ENCODE measurements at regions of chr22 and their contacts with region 1.

Region 1: GRCh38 chr22:37244114-37244921 is at the start of gene RAC2:
- DNase-seq: peak; percentile 93 to 99 (median 98)
- H3K4me3 ChIP-seq: peak within 1 kb of the TSS; percentile 67 to 99 (median 93)
- H3K27ac ChIP-seq: peak within 1 kb of the TSS; percentile 79 to 89
- H3K4me1 ChIP-seq: peaks cover 6 to 66% (median 58%) of the 10 kb centered on the region in 4 experiments
- H3K27me3 ChIP-seq: no peaks in the 10 kb centered on the region

Region 2: DNA sequence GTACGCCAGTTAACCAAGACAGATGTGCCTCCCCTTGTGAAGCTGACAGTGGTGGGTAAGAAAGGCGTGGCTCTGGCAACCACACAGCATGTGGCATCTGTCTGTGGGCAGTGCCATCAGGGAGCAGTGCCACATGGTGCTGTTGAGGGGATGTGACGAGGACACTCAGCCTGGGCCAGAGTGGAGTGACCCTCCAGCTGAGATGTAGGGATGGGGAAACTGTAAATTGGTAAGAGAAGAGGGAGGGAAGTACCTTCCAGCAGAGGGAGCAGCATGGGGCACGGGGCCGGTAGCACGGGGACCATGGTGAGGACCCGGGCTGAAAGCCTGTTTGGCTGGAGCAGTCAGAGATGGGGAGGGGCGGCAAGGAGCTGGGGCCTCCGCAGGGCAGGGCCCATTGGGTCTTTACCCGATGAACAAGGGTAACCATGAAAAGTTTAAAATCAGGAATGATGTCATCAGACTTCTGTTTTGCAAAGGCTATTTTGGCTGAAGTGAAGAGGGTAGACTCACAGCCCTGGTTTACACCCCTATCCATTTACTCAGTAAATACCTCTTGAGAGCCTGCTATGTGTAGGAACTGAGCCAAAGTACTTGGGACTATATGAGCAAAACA is 145.2 kb before region 1 on chr22:
- CTCF ChIA-PET with region 1: no interaction called
- POLR2A ChIA-PET with region 1: no interaction called
- DNase-seq: peak; percentile 19 to 47 (median 32)
- H3K4me3 ChIP-seq: no peak overlapping the region
- H3K27ac ChIP-seq: no peak overlapping the region
- H3K4me1 ChIP-seq: no peaks in the 10 kb centered on the region
- H3K27me3 ChIP-seq: peaks cover 0 to 39% (median 7%) of the 10 kb centered on the region in 5 experiments

Region 3: GRCh38 chr22:37199103-37199759 is 45.1 kb before region 1 on chr22:
- CTCF ChIA-PET with region 1: interaction called, 15 read pairs
- POLR2A ChIA-PET with region 1: interaction called, 4 read pairs
- DNase-seq: peak; percentile 98 to 99 (median 99)
- H3K4me3 ChIP-seq: peak overlapping the region; percentile 48 to 82 (median 61)
- H3K27ac ChIP-seq: peak overlapping the region; percentile 78 to 81
- H3K4me1 ChIP-seq: peaks cover 3 to 31% (median 19%) of the 10 kb centered on the region in 4 experiments
- H3K27me3 ChIP-seq: no peaks in the 10 kb centered on the region

Region 4: GRCh38 chr22:37218771-37219411 is 25.4 kb before region 1 on chr22:
- CTCF ChIA-PET with region 1: interaction called, 11 read pairs
- POLR2A ChIA-PET with region 1: interaction called, 3 read pairs
- DNase-seq: peak; percentile 68 to 98 (median 96)
- H3K4me3 ChIP-seq: peak overlapping the region in 1 of 7 experiments; percentile 17
- H3K27ac ChIP-seq: no peak overlapping the region
- H3K4me1 ChIP-seq: peaks cover 9 to 69% (median 40%) of the 10 kb centered on the region in 4 experiments
- H3K27me3 ChIP-seq: no peaks in the 10 kb centered on the region

Region 5: DNA sequence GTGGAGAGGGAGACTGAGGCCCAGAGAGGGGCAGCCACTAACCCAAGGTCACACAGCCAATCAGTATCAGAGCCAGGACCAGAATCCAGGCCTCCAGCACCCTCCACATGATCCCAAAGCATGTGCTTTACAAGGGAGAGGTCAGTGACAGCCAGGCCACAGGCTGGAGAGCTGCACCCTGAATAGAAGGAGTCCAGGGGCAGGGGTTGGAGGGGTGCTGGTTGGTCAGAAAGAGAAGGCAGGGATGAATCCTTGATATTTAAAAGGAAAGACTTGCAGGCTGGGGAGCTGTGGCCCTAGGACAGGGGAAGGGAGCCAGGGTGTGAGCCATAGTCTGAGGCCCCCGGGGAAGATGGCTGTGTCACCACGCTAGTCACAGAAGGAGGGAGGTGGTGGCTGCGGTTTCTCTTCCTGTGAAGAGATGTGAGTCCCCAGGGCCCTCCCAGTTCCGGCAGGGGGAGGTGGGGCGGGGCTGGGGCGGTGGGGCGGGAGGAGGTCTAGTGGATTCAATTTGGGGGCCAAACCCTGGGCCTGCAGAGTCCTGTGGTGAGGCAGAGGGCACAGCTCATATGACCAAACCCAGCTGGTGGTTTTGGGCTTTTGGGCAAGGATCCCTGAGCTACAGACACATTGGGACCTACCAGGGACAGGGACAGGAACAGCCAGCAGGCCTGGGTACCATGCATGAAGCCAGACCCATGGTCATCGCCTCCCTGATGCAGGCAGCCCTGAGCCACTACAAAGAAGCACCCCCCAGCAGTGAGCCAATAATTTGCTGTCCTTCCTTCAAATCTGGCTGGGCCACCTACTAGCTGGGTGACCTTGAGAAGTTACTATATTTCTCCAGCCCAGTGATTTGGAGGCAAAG is 14.3 kb before region 1 on chr22:
- CTCF ChIA-PET with region 1: interaction called, 74 read pairs
- POLR2A ChIA-PET with region 1: interaction called, 45 read pairs
- DNase-seq: peak; percentile 88 to 97 (median 96)
- H3K4me3 ChIP-seq: peak overlapping the region in 4 of 7 experiments; percentile 1 to 44 (median 27)
- H3K27ac ChIP-seq: peak overlapping the region; percentile 58 to 79
- H3K4me1 ChIP-seq: peaks cover 2 to 85% (median 64%) of the 10 kb centered on the region in 4 experiments
- H3K27me3 ChIP-seq: no peaks in the 10 kb centered on the region

Region 6: GRCh38 chr22:37267135-37267587 is 22.8 kb after region 1 on chr22:
- CTCF ChIA-PET with region 1: interaction called, 157 read pairs
- POLR2A ChIA-PET with region 1: interaction called, 4 read pairs
- DNase-seq: peak in 2 of 3 donors; percentile 59 to 62
- H3K4me3 ChIP-seq: peak overlapping the region in 6 of 7 experiments; percentile 30 to 75 (median 56)
- H3K27ac ChIP-seq: peak overlapping the region; percentile 43 to 78
- H3K4me1 ChIP-seq: peaks cover 22 to 49% (median 46%) of the 10 kb centered on the region in 4 experiments
- H3K27me3 ChIP-seq: no peaks in the 10 kb centered on the region

Measured in common myeloid progenitor, CD34-positive (primary cell).